A673 (cell line): ENCODE measurements at regions of chr5 and their contacts with region 1.

Region 1: GRCh38 chr5:14871210-14872069 is at the start of gene ANKH:
- DNase-seq: peak; percentile 82
- H3K4me3 ChIP-seq: peak within 1 kb of the TSS; percentile 51
- H3K27ac ChIP-seq: no peak within 1 kb of the TSS
- H3K4me1 ChIP-seq: peaks cover 5% of the 10 kb centered on the region
- H3K27me3 ChIP-seq: peaks cover 55% of the 10 kb centered on the region
- CTCF ChIP-seq: no peak
- total RNA-seq, gene ANKH: 8.8 and 13.9 TPM in 2 replicates

Region 2: DNA sequence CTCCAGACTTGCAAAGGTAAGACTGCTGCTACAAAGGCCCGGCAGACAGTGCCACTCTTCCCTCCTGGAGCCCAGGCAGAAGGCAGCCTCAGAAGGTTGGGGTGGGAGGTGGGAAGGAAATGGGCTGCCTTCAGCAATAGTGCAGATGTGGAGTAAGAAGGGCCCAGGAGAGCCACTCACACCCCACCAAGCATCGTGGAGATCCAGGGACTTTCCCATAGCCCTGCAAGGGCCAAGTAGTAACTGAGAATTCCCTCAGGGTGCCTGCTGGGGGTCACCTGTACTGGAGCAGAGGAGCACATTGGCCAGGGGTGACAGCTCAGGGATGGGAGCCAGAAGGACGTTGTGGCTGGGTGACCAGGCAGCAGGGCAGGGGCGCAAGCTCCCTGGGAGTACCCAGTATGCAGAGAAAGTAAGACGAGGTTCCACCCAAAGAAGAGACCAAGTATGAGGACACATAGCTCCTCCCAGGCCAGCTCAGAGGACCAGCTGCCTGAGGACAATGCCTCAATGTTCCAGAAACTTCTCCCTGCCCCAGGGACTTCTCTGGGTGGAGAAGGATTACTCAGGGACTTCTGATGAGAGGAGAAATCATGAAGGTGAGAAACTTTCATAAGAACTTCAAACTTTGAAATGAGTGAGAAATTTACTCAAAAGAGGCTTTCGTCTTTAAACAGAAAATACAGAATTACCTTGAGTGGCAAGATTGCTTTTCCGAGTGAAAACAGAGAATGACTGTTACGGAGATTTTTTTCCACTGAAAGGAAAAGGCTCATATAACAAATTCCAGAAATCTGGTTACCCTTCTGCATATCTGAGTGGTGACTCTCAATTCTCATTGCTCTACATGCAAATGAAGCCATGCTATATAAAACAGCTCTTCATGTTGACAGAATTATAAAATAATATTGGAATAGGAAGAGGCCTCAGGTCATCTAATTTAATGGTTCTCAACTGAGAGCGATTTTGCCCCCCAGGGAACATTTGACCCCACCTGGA is 816.2 kb before region 1 on chr5:
- CTCF ChIA-PET with region 1: no interaction called
- POLR2A ChIA-PET with region 1: interaction called, 14 read pairs
- intact Hi-C with region 1: no loop called
- DNase-seq: no peak
- H3K4me3 ChIP-seq: no peak overlapping the region
- H3K27ac ChIP-seq: no peak overlapping the region
- H3K4me1 ChIP-seq: no peaks in the 10 kb centered on the region
- H3K27me3 ChIP-seq: no peaks in the 10 kb centered on the region
- CTCF ChIP-seq: no peak

Region 3: GRCh38 chr5:14615344-14615743 is 256.1 kb before region 1 on chr5:
- CTCF ChIA-PET with region 1: no interaction called
- POLR2A ChIA-PET with region 1: no interaction called
- intact Hi-C with region 1: no loop called
- DNase-seq: no peak
- H3K4me3 ChIP-seq: no peak overlapping the region
- H3K27ac ChIP-seq: no peak overlapping the region
- H3K4me1 ChIP-seq: no peaks in the 10 kb centered on the region
- H3K27me3 ChIP-seq: peaks cover 30% of the 10 kb centered on the region
- CTCF ChIP-seq: no peak

Region 4: GRCh38 chr5:14727428-14727865 is 144.0 kb before region 1 on chr5:
- CTCF ChIA-PET with region 1: no interaction called
- POLR2A ChIA-PET with region 1: no interaction called
- intact Hi-C with region 1: loop called (anchors 5 kb)
- DNase-seq: peak; percentile 83
- H3K4me3 ChIP-seq: no peak overlapping the region
- H3K27ac ChIP-seq: no peak overlapping the region
- H3K4me1 ChIP-seq: no peaks in the 10 kb centered on the region
- H3K27me3 ChIP-seq: no peaks in the 10 kb centered on the region
- CTCF ChIP-seq: peak; percentile 93

Region 5: DNA sequence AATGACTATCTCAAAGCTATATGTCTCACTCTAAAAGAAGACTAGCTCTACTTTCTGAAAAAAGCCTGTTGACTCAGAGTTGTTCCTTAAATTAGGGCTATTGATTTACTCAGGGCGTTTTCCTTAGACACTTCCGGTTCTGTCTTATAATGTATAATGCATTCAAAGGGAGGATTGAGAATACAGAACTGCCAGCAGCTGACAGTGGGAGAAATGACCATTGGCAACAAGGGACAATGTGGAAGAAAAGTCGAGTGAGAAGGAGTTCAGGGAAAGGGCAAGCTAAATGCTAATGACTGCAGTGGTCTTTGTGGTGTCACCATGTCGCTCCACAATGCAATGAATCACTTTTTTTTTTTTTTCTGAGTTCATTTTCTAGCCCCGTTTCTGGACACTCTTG is 65.8 kb after region 1 on chr5:
- CTCF ChIA-PET with region 1: no interaction called
- POLR2A ChIA-PET with region 1: no interaction called
- intact Hi-C with region 1: loop called (anchors 2 kb)
- DNase-seq: peak; percentile 33
- H3K4me3 ChIP-seq: no peak overlapping the region
- H3K27ac ChIP-seq: no peak overlapping the region
- H3K4me1 ChIP-seq: no peaks in the 10 kb centered on the region
- H3K27me3 ChIP-seq: no peaks in the 10 kb centered on the region
- CTCF ChIP-seq: no peak